PC-9 (cell line): ENCODE measurements at regions of chr3 and their contacts with region 1.

Region 1: GRCh38 chr3:165159760-165160421 is 36.3 kb downstream of the SLITRK3 start:
- DNase-seq: no peak
- H3K4me3 ChIP-seq: no peak overlapping the region
- H3K27ac ChIP-seq: no peak overlapping the region
- H3K4me1 ChIP-seq: no peaks in the 10 kb centered on the region
- H3K27me3 ChIP-seq: no peaks in the 10 kb centered on the region
- CTCF ChIP-seq: no peak

Region 2: GRCh38 chr3:164845739-164846138 is 314.2 kb before region 1 on chr3:
- CTCF ChIA-PET with region 1: no interaction called
- POLR2A ChIA-PET with region 1: no interaction called
- intact Hi-C with region 1: loop called (anchors 10 kb)
- DNase-seq: no peak
- H3K4me3 ChIP-seq: no peak overlapping the region
- H3K27ac ChIP-seq: no peak overlapping the region
- H3K4me1 ChIP-seq: no peaks in the 10 kb centered on the region
- H3K27me3 ChIP-seq: no peaks in the 10 kb centered on the region
- CTCF ChIP-seq: no peak